ENCODE measurements at regions of chr6 and their contacts with region 1.

Region 1: DNA sequence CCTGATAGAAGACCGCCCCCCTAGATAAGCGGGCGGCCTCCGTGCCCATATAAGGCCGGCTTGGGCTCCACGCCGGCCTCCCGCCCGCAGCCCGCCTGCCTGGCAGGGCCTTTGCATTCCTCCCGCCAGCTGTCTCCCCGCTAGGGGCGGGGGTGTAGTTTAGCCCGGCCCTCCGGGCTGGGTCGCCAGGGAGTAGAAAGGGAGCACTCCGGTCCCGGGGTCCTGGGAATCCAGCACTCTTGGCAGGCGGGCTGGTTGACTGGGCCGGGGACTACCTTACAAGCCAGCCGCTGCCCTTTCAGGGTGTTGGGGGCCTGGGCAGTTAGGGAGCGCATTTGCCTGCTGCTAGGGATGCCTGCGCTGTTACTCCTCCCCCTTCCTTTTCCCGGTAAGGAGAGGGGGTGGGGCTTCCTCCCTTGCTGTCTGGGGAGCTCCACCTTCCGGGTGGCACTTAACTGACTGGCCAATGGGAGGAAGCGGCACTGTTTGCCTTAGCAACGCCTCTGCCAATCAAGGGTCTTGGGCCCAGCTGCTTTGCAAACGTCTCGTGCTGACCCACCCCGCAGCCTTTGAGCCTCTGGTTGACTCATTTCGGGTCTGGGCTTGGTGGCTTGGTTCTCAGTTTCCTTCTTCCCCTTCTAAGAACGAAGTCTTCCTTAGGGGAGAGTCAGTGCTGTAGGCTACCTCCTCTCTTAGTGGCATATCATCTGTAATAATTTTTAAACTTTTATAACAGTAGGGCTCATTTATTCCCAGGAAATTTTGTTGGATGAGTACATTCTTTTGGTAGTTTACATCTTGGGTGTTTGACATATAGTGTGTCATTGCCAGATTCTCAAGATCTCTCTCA is 3.4 kb downstream of the SRF start:
- DNase-seq: peak; percentile 66 to 92 (median 88)
- ATAC-seq: peak; percentile 77
- H3K4me3 ChIP-seq: peak overlapping the region; percentile 72
- H3K4me3 Mint-ChIP-seq: peak overlapping the region; percentile 85 to 99 (median 96)
- H3K27ac ChIP-seq: peak overlapping the region; percentile 73
- H3K27ac Mint-ChIP-seq: peak overlapping the region; percentile 90 to 98 (median 94)
- H3K4me1 ChIP-seq: peaks cover 26 to 29% of the 10 kb centered on the region in 2 donors
- H3K4me1 Mint-ChIP-seq: peaks cover 35 to 49% (median 40%) of the 10 kb centered on the region in 7 donors
- H3K27me3 ChIP-seq: no peaks in the 10 kb centered on the region
- H3K27me3 Mint-ChIP-seq: peaks cover 0 to 2% (median 0%) of the 10 kb centered on the region in 5 donors

Region 2: GRCh38 chr6:41787219-41787917 is 1387.1 kb before region 1 on chr6 and contains the start of gene TOMM6:
- CTCF ChIA-PET with region 1: no interaction called
- POLR2A ChIA-PET with region 1: no interaction called
- intact Hi-C with region 1: loop called in 1 of 2 experiments (anchors 5 kb)
- DNase-seq: peak; percentile 87 to 96 (median 94)
- ATAC-seq: peak; percentile 88
- H3K4me3 ChIP-seq: peak within 1 kb of the TSS; percentile 97
- H3K4me3 Mint-ChIP-seq: peak within 1 kb of the TSS; percentile 91 to 99 (median 97)
- H3K27ac ChIP-seq: peak within 1 kb of the TSS; percentile 89
- H3K27ac Mint-ChIP-seq: peak within 1 kb of the TSS; percentile 95 to 99 (median 98)
- H3K4me1 ChIP-seq: peaks cover 6 to 9% of the 10 kb centered on the region in 2 donors
- H3K4me1 Mint-ChIP-seq: peaks cover 8 to 29% (median 17%) of the 10 kb centered on the region in 7 donors
- H3K27me3 ChIP-seq: no peaks in the 10 kb centered on the region
- H3K27me3 Mint-ChIP-seq: peaks cover 0 to 14% (median 0%) of the 10 kb centered on the region in 5 donors
- total RNA-seq, gene TOMM6: 114 to 193 (median 128) TPM

Region 3: DNA sequence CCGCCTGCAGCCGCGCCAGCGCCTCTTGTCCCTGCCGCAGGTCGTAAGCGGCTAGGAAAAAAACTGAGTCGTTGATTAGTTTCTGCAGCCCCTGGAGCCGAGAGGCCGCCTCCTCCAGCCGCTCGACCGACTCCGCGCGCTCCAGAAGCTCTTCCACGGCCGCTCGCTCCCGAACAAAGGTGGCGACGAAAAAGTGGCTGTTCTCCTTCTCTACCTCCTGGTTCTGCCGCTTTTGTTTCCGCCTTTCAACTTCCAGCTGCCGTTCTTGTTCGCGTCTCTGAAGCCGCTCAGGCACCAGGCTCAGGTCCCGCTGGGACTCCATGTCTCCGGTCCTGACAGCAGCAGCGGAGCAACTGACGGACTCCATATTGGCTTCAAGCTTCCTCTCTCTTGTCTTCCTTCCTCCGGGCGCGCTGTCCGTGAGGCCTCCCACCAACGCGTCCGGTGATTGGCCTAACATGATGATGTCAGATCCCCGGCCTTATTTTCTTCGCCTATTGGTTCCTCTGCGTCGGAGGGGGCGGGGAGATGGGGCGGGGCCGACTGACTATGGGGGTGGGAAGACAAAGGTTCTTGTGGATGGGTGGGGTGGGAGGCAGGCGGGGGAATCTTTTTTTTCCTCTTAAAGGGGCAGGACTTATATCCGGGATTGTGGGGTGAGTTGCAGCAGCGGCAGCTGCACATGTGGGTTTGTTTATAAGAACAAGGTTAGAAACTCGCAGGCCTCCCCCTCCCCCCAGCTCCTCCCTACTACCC is 428.6 kb before region 1 on chr6 and contains the start of gene TBCC:
- CTCF ChIA-PET with region 1: no interaction called
- POLR2A ChIA-PET with region 1: no interaction called
- intact Hi-C with region 1: loop called (anchors 1 kb)
- DNase-seq: peak; percentile 73 to 97 (median 93)
- ATAC-seq: peak; percentile 88
- H3K4me3 ChIP-seq: peak within 1 kb of the TSS; percentile 95
- H3K4me3 Mint-ChIP-seq: peak within 1 kb of the TSS; percentile 91 to 100 (median 99)
- H3K27ac ChIP-seq: peak within 1 kb of the TSS; percentile 88
- H3K27ac Mint-ChIP-seq: peak within 1 kb of the TSS; percentile 97 to 100 (median 100)
- H3K4me1 ChIP-seq: peaks cover 19 to 29% of the 10 kb centered on the region in 2 donors
- H3K4me1 Mint-ChIP-seq: peaks cover 12 to 39% (median 27%) of the 10 kb centered on the region in 7 donors
- H3K27me3 ChIP-seq: no peaks in the 10 kb centered on the region
- H3K27me3 Mint-ChIP-seq: no peaks in the 10 kb centered on the region
- total RNA-seq, gene TBCC: 39.6 to 74.8 (median 71.4) TPM

Region 4: GRCh38 chr6:43013843-43014433 is 160.6 kb before region 1 on chr6 and contains the starts of genes KLHDC3 and MEA1:
- CTCF ChIA-PET with region 1: no interaction called
- POLR2A ChIA-PET with region 1: interaction called, 3 read pairs
- intact Hi-C with region 1: loop called (anchors 1 kb)
- DNase-seq: peak; percentile 83 to 100 (median 99)
- ATAC-seq: peak; percentile 98
- H3K4me3 ChIP-seq: peak within 1 kb of the TSS; percentile 73
- H3K4me3 Mint-ChIP-seq: peak within 1 kb of the TSS; percentile 85 to 99 (median 92)
- H3K27ac ChIP-seq: peak within 1 kb of the TSS; percentile 84
- H3K27ac Mint-ChIP-seq: peak within 1 kb of the TSS; percentile 82 to 97 (median 92)
- H3K4me1 ChIP-seq: peaks cover 20 to 31% of the 10 kb centered on the region in 2 donors
- H3K4me1 Mint-ChIP-seq: peaks cover 45 to 78% (median 58%) of the 10 kb centered on the region in 7 donors
- H3K27me3 ChIP-seq: no peaks in the 10 kb centered on the region
- H3K27me3 Mint-ChIP-seq: peaks cover 0 to 3% (median 0%) of the 10 kb centered on the region in 5 donors
- total RNA-seq, gene KLHDC3: 39.9 to 76.9 (median 67.4) TPM
- total RNA-seq, gene MEA1: 20.3 to 58.0 (median 32.7) TPM

Region 5: DNA sequence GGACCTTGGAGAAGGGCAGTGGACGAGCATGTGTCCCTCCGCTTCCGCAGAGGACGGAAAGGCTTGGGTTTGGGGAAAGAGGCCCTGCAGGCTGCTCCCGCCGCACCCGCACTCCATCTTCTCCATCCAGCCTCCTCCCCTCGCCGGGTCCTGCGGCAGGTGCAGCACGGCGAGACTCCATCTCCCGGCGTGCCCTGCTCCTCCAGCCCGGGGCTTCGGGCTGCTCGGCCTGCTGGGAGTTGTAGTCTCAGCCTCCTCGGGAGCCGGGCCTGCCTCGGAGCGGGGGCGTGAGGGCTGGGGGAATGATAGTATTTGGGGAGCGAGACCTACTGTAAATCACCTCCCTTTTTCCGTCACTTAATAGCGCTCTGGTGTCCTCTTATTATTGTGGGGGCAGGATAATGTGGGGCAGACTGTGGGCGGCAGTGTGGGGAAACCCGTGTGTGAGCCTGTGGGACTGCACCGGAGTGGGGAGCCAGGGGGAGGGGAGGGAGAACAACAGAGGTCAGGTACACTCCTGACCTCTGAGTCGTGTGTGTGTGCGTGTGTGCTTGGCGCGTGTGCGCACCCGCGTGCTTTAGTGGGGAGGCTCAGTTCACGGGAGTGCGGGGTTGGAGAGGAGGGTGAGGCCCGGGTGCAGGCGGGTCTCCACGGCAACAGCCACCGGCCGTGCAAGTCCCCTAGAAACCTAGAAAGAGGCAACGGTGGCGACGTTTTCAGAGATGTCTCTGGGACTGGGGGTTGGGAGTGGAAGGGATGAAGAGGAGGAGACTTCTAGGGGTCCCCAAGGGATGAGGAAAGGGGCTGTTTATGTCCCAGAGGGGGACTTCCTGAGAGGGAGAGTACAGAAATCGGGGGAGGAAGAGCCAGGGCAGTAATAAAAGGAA is 72.9 kb after region 1 on chr6:
- CTCF ChIA-PET with region 1: no interaction called
- POLR2A ChIA-PET with region 1: no interaction called
- intact Hi-C with region 1: loop called (anchors 1 kb)
- DNase-seq: peak; percentile 65 to 81 (median 78)
- ATAC-seq: peak; percentile 95
- H3K4me3 ChIP-seq: peak overlapping the region; percentile 84
- H3K4me3 Mint-ChIP-seq: peak overlapping the region in 9 of 10 donors; percentile 83 to 94 (median 88)
- H3K27ac ChIP-seq: peak overlapping the region; percentile 78
- H3K27ac Mint-ChIP-seq: peak overlapping the region; percentile 76 to 92 (median 89)
- H3K4me1 ChIP-seq: peaks cover 3 to 13% of the 10 kb centered on the region in 2 donors
- H3K4me1 Mint-ChIP-seq: peaks cover 11 to 26% (median 21%) of the 10 kb centered on the region in 7 donors
- H3K27me3 ChIP-seq: peaks cover 3 to 13% of the 10 kb centered on the region in 2 donors
- H3K27me3 Mint-ChIP-seq: peaks cover 7 to 33% (median 14%) of the 10 kb centered on the region in 5 donors

Region 6: DNA sequence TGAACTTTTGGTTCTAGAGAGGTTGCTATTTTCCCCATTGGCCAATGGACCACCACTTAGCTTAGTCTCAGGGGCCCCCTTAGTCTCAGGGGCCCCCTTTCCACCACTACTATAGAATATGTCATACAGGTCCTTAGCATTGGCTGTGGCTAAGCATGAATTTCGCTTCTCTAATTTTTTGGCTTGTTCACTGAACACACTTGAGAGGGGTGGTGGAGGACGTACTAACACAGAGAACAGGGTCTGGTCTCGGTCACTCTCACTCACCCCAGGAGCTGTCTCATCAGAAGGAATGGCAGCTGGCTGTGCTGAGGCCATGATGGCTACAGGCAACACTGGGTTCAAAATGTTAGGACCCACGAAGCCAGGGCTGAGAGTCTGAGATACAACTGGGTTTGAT is 164.7 kb after region 1 on chr6:
- CTCF ChIA-PET with region 1: no interaction called
- POLR2A ChIA-PET with region 1: no interaction called
- intact Hi-C with region 1: no loop called
- DNase-seq: no peak
- ATAC-seq: no peak
- H3K4me3 ChIP-seq: no peak overlapping the region
- H3K4me3 Mint-ChIP-seq: no peak overlapping the region
- H3K27ac ChIP-seq: no peak overlapping the region
- H3K27ac Mint-ChIP-seq: peak overlapping the region in 2 of 9 donors; percentile 58 to 81
- H3K4me1 ChIP-seq: no peaks in the 10 kb centered on the region
- H3K4me1 Mint-ChIP-seq: peaks cover 0 to 18% (median 8%) of the 10 kb centered on the region in 7 donors
- H3K27me3 ChIP-seq: no peaks in the 10 kb centered on the region
- H3K27me3 Mint-ChIP-seq: no peaks in the 10 kb centered on the region

Region 7: GRCh38 chr6:43477235-43478007 is 302.9 kb after region 1 on chr6 and contains the start of gene TJAP1:
- CTCF ChIA-PET with region 1: no interaction called
- POLR2A ChIA-PET with region 1: no interaction called
- intact Hi-C with region 1: loop called in 1 of 2 experiments (anchors 2 kb)
- DNase-seq: peak; percentile 89 to 99 (median 95)
- ATAC-seq: peak; percentile 100
- H3K4me3 ChIP-seq: peak within 1 kb of the TSS; percentile 83
- H3K4me3 Mint-ChIP-seq: peak within 1 kb of the TSS; percentile 87 to 99 (median 93)
- H3K27ac ChIP-seq: peak within 1 kb of the TSS; percentile 96
- H3K27ac Mint-ChIP-seq: peak within 1 kb of the TSS; percentile 90 to 98 (median 96)
- H3K4me1 ChIP-seq: peaks cover 10 to 16% of the 10 kb centered on the region in 2 donors
- H3K4me1 Mint-ChIP-seq: peaks cover 37 to 54% (median 51%) of the 10 kb centered on the region in 7 donors
- H3K27me3 ChIP-seq: no peaks in the 10 kb centered on the region
- H3K27me3 Mint-ChIP-seq: no peaks in the 10 kb centered on the region
- total RNA-seq, gene TJAP1: 29.2 to 55.2 (median 33.5) TPM